T-cell (primary cell): ENCODE measurements at regions of chr2 and their contacts with region 1.

Region 1: GRCh38 chr2:74515981-74516633 is 1.9 kb downstream of the TLX2 start:
- DNase-seq: peak in 34 of 35 experiments; percentile 18 to 75 (median 60)
- ATAC-seq: peak; percentile 79 to 93 (median 83)
- H3K4me3 ChIP-seq: peak overlapping the region; percentile 28 to 66
- H3K4me3 Mint-ChIP-seq: peak overlapping the region; percentile 70 to 75 (median 74)
- H3K27ac ChIP-seq: no peak overlapping the region
- H3K27ac Mint-ChIP-seq: no peak overlapping the region
- H3K4me1 ChIP-seq: peaks cover 7 to 36% of the 10 kb centered on the region in 2 experiments
- H3K4me1 Mint-ChIP-seq: peaks cover 14 to 29% (median 21%) of the 10 kb centered on the region in 3 donors
- H3K27me3 ChIP-seq: peaks cover 9 to 83% of the 10 kb centered on the region in 2 experiments
- H3K27me3 Mint-ChIP-seq: peaks cover 55 to 79% of the 10 kb centered on the region in 2 donors

Region 2: DNA sequence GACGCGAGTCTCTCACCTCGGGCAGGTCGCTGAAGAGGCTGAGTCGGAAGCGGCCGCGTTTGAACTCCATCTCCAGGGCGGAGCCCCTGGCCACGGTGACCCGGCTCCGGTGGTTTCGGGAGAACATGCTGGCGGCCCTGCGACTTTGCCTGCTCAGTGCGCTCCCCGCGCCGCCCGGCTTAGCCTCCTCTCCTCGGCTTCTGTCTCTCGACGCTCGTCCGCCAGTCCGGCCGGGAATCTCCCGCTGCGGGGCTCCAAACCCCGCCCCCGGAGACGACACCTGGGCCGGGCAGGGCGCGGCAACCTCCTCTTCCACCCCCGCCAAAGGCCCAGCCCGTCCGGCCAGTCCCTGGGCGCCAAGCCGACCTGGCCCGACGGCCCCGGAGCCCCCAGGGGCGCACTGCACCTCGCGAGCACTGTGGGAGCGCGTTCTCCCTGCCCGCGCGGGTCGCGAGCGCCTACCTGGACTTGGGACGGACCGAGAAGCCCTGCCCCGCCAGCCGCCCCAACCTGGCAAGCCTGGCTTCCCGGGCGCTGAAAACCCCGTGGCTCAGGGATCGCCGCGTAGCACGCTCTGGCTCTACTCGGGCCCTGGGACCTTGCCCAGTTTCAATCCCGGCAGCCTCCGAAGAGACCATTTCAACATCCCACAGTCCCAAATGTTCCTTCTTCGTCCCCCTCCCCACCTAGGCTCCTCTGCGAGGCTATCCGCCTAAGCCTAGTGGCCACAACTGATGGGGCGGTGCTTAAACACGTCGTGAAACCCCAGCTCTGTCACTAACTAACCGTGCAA is 74.2 kb before region 1 on chr2 and contains the start of gene RTKN:
- CTCF ChIA-PET with region 1: interaction called in 1 of 2 experiments, 10 read pairs
- POLR2A ChIA-PET with region 1: no interaction called
- DNase-seq: peak in 9 of 35 experiments; percentile 9 to 50 (median 26)
- ATAC-seq: peak; percentile 41 to 52 (median 48)
- H3K4me3 ChIP-seq: peak within 1 kb of the TSS; percentile 16 to 56
- H3K4me3 Mint-ChIP-seq: peak within 1 kb of the TSS; percentile 56 to 77 (median 59)
- H3K27ac ChIP-seq: no peak within 1 kb of the TSS
- H3K27ac Mint-ChIP-seq: no peak within 1 kb of the TSS
- H3K4me1 ChIP-seq: peaks cover 0 to 26% of the 10 kb centered on the region in 2 experiments
- H3K4me1 Mint-ChIP-seq: peaks cover 13 to 15% (median 14%) of the 10 kb centered on the region in 3 donors
- H3K27me3 ChIP-seq: peaks cover 4 to 54% of the 10 kb centered on the region in 2 experiments
- H3K27me3 Mint-ChIP-seq: peaks cover 21 to 41% of the 10 kb centered on the region in 2 donors
- total RNA-seq, gene RTKN: 0.93 to 1.7 (median 0.96) TPM in 4 of 5 donors, not detected in the other